Tibial artery (tissue), 4 donors: ENCODE measurements at regions of chr6 and their contacts with region 1.

Region 1: GRCh38 chr6:154800338-154800737 is 67.1 kb downstream of the SCAF8 start:
- DNase-seq: no peak
- H3K4me3 ChIP-seq: no peak overlapping the region
- H3K27ac ChIP-seq: no peak overlapping the region
- H3K4me1 ChIP-seq: peaks cover 0 to 13% (median 0%) of the 10 kb centered on the region in 4 donors
- H3K27me3 ChIP-seq: no peaks in the 10 kb centered on the region
- CTCF ChIP-seq: no peak

Region 2: DNA sequence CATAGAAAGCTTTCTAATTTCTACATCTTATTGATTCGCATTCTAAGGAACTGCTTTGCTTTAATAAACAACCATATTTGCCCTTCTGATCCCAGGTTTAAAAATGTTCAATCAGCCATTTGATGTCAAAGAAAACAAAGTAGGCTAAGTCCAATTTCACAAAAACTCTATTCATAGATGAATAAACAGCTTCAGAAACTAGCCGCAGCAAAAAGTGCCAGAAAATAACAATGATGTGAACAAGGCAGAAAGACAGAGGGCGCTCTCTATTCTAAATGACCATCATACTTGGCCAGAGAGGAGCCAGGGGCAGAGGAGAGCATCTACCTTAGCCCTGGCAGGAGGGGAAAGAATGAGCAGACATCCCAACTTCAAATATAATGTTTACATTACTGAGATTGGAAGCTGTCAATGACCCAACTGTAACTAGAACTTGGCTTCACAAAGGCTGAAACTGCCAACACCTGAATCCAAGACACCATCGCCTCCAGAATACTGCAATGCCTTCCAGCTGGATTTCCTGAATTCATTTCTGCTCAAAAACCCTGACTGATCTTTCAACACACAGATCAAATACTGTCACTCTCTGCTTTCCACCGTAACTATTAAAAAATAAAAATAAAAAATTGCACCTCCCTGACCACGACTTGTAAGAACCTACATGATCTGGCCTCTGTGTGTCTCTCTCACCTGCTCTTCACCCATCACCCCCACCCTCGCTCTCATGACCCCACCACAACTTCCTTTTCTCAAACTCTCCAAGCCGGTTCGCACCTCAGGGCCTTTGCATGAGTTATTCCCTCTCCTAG is 299.4 kb before region 1 on chr6:
- intact Hi-C with region 1: no loop called
- DNase-seq: no peak
- H3K4me3 ChIP-seq: no peak overlapping the region
- H3K27ac ChIP-seq: no peak overlapping the region
- H3K4me1 ChIP-seq: peaks cover 0 to 37% (median 2%) of the 10 kb centered on the region in 4 donors
- H3K27me3 ChIP-seq: no peaks in the 10 kb centered on the region
- CTCF ChIP-seq: peak in 1 of 2 experiments; percentile 32

Region 3: GRCh38 chr6:154675602-154676088 is 124.7 kb before region 1 on chr6:
- intact Hi-C with region 1: loop called (anchors 5 kb)
- DNase-seq: peak; percentile 91 to 93
- H3K4me3 ChIP-seq: no peak overlapping the region
- H3K27ac ChIP-seq: no peak overlapping the region
- H3K4me1 ChIP-seq: no peaks in the 10 kb centered on the region
- H3K27me3 ChIP-seq: no peaks in the 10 kb centered on the region
- CTCF ChIP-seq: peak; percentile 99

Region 4: GRCh38 chr6:154733012-154733625 is 67.2 kb before region 1 on chr6 and contains the start of gene SCAF8:
- intact Hi-C with region 1: loop called (anchors 5 kb)
- DNase-seq: peak; percentile 65 to 88
- H3K4me3 ChIP-seq: peak within 1 kb of the TSS; percentile 82 to 97
- H3K27ac ChIP-seq: peak within 1 kb of the TSS; percentile 95 to 99
- H3K4me1 ChIP-seq: peaks cover 0 to 49% (median 38%) of the 10 kb centered on the region in 4 donors
- H3K27me3 ChIP-seq: no peaks in the 10 kb centered on the region
- CTCF ChIP-seq: peak; percentile 74 to 92